B cell (primary cell): ENCODE measurements at regions of chr15 and their contacts with region 1.

Region 1: GRCh38 chr15:47987908-47988532 is 132.8 kb upstream of the SLC24A5 start:
- DNase-seq: peak; percentile 45
- ATAC-seq: no peak
- H3K4me3 ChIP-seq: no peak overlapping the region
- H3K4me3 Mint-ChIP-seq: no peak overlapping the region
- H3K27ac ChIP-seq: no peak overlapping the region
- H3K27ac Mint-ChIP-seq: no peak overlapping the region
- H3K4me1 ChIP-seq: no peaks in the 10 kb centered on the region
- H3K4me1 Mint-ChIP-seq: no peaks in the 10 kb centered on the region
- H3K27me3 ChIP-seq: no peaks in the 10 kb centered on the region
- H3K27me3 Mint-ChIP-seq: peaks cover 6% of the 10 kb centered on the region
- CTCF ChIP-seq: peak; percentile 66

Region 2: DNA sequence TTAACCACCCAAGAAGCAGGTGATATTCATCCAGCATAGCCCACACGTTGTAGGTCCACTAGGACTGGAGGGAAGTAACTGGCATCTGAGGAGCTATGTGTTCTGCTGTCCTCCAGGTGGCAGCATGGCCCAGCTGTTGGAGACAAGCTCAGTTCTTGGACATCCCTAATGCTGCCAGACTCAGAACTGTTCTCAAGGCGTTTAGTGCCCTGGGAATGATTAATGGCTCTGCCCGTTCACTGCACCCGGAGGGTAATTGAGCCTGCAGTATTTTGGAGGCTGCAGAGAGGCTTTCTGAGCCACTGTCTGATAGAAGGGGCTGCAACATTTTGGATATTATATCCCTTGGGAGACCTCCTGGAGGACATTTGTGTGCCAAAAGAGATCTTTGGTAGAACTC is 792.0 kb before region 1 on chr15:
- CTCF ChIA-PET with region 1: interaction called, 8 read pairs
- POLR2A ChIA-PET with region 1: no interaction called
- intact Hi-C with region 1: loop called (anchors 5 kb)
- DNase-seq: peak; percentile 50
- ATAC-seq: no peak
- H3K4me3 ChIP-seq: no peak overlapping the region
- H3K4me3 Mint-ChIP-seq: no peak overlapping the region
- H3K27ac ChIP-seq: no peak overlapping the region
- H3K27ac Mint-ChIP-seq: no peak overlapping the region
- H3K4me1 ChIP-seq: no peaks in the 10 kb centered on the region
- H3K4me1 Mint-ChIP-seq: no peaks in the 10 kb centered on the region
- H3K27me3 ChIP-seq: no peaks in the 10 kb centered on the region
- H3K27me3 Mint-ChIP-seq: no peaks in the 10 kb centered on the region
- CTCF ChIP-seq: peak; percentile 58

Region 3: GRCh38 chr15:47473832-47474231 is 514.2 kb before region 1 on chr15:
- CTCF ChIA-PET with region 1: no interaction called
- POLR2A ChIA-PET with region 1: no interaction called
- intact Hi-C with region 1: loop called (anchors 5 kb)
- DNase-seq: no peak
- ATAC-seq: no peak
- H3K4me3 ChIP-seq: no peak overlapping the region
- H3K4me3 Mint-ChIP-seq: no peak overlapping the region
- H3K27ac ChIP-seq: no peak overlapping the region
- H3K27ac Mint-ChIP-seq: no peak overlapping the region
- H3K4me1 ChIP-seq: no peaks in the 10 kb centered on the region
- H3K4me1 Mint-ChIP-seq: no peaks in the 10 kb centered on the region
- H3K27me3 ChIP-seq: no peaks in the 10 kb centered on the region
- H3K27me3 Mint-ChIP-seq: no peaks in the 10 kb centered on the region
- CTCF ChIP-seq: no peak